Adrenal gland (tissue), 19 donors: ENCODE measurements at regions of chr17 and their contacts with region 1.

Region 1: DNA sequence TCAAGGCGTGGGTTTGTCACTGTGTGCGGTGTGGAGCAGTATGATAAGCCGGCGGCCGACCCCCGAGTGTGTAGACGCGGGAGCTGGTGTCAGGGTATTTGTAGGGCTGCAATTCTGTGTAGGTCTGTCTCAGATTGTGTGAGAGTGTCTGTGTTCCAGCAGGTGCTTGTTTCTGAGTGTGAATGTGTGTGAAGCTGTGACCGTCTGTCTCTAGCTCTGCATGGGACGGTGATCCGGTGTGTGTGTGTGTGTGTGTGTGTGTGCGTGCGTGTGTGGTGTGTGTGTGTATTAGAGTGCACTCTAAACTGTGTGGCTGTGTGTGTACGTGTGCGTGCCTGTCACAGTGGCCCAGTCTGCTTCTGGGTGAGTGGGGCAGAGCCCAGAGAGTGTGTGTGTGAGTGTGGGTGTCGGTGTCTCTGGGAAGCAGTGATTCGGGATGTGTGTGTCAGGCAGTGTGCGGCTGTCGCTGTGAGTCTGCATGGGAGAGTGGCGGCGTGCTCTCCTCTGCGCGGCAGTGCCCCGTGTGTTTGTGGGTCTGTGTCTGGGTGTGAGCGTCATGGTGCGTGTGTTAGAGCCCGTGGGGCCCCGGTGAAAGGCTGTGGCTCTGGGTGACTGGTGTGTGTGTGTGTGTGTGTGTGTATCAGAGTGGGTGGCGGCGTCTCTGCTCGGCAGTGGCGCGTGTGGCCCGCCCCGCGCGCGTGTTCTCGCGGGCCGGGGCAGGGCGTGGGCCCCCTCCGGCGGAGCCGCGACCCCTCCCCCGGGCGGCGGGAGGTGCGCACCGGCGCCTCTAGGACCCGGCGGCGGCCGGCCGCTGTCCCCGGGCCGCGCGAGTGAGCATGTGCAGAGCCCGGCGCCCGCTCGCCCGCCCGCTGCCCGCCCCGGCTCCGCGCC is at the start of gene WSCD1:
- DNase-seq: peak in 5 of 7 donors; percentile 33 to 55 (median 45)
- H3K4me3 ChIP-seq: peak within 1 kb of the TSS in 2 of 4 donors; percentile 45 to 83
- H3K27ac ChIP-seq: peak within 1 kb of the TSS in 1 of 5 donors; percentile 22
- H3K4me1 ChIP-seq: peaks cover 0 to 6% of the 10 kb centered on the region in 2 donors
- H3K27me3 ChIP-seq: no peaks in the 10 kb centered on the region
- CTCF ChIP-seq: no peak
- POLR2A ChIP-seq: no peak
- total RNA-seq, gene WSCD1: 3.1 to 17.9 (median 10.5) TPM

Region 2: DNA sequence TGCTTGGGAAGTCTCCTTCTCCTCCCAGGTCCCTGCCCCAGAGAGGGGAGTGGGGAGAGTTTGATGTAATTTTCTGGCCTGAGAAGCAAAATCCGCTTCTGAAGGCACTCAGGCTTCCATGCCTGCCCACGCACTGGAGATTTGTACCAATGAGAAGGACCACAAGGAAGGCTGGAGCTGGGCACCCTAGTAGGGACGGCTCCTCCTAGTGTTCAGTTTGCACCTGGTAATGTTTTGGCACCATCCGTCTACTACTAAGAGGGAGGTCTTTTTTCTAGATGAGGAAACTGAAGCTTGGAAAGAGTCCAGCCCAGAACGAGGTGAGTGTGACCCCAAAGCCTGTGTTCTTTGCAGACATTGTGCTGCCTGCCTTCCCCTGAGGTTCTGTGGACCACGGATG is 401.9 kb before region 1 on chr17:
- intact Hi-C with region 1: no loop called
- DNase-seq: no peak
- H3K4me3 ChIP-seq: no peak overlapping the region
- H3K27ac ChIP-seq: no peak overlapping the region
- H3K4me1 ChIP-seq: no peaks in the 10 kb centered on the region
- H3K27me3 ChIP-seq: peaks cover 3% of the 10 kb centered on the region
- CTCF ChIP-seq: peak in 1 of 6 experiments; percentile 7
- POLR2A ChIP-seq: no peak

Region 3: DNA sequence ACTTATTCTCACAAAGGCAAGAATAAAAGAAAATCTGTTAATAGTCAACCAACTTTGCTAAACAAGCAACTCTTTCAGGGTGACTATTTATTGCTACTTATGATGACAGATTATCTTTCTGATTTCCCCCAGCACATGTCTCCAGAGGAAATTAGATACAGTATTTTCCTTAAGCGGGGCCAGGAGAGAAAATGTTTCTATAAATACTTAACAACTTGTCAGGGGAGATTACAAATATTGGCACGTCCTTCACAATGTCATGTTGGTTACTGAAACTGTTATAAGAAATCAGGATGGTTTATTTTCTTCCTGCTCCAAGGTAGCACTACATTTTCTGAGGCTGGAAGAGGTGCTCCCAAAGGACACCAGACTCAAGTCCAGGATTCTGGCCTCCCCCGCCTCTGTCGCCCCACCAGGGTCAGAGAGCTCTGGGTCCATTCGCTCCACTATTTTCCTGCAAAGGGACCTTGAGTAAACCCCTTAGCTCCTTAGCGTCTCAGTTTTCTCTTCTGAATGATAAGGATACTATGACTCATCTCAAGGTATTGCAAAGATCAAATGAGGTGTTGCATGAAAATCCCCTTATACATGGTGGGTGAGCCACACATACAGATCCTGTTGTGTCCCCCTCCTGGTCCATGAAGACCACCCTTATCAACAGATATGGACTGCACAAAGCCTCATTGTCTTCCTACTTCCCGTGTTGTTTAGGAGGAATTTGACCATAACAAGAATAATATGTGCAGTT is 204.7 kb before region 1 on chr17:
- intact Hi-C with region 1: no loop called
- DNase-seq: peak in 1 of 7 donors; percentile 11
- H3K4me3 ChIP-seq: no peak overlapping the region
- H3K27ac ChIP-seq: no peak overlapping the region
- H3K4me1 ChIP-seq: no peaks in the 10 kb centered on the region
- H3K27me3 ChIP-seq: peaks cover 3% of the 10 kb centered on the region
- CTCF ChIP-seq: no peak
- POLR2A ChIP-seq: no peak

Region 4: GRCh38 chr17:6413065-6413464 is 343.3 kb after region 1 on chr17:
- intact Hi-C with region 1: loop called in 1 of 2 experiments (anchors 10 kb)
- DNase-seq: no peak
- H3K4me3 ChIP-seq: no peak overlapping the region
- H3K27ac ChIP-seq: no peak overlapping the region
- H3K4me1 ChIP-seq: no peaks in the 10 kb centered on the region
- H3K27me3 ChIP-seq: peaks cover 4% of the 10 kb centered on the region
- CTCF ChIP-seq: peak in 4 of 6 experiments; percentile 30 to 41 (median 34)
- POLR2A ChIP-seq: no peak